ENCODE measurements at regions of chr3 and their contacts with region 1.

Region 1: GRCh38 chr3:48439820-48440589 is at the starts of genes CCDC51 and TMA7:
- DNase-seq: peak; percentile 93
- ATAC-seq: peak; percentile 96
- H3K4me3 ChIP-seq: peak within 1 kb of the TSS; percentile 89
- H3K27ac ChIP-seq: peak within 1 kb of the TSS; percentile 86
- H3K4me1 ChIP-seq: peaks cover 19% of the 10 kb centered on the region
- H3K27me3 ChIP-seq: no peaks in the 10 kb centered on the region
- CTCF ChIP-seq: 0 out of 6 replicates have a peak, but pooled peaks of 1 of the 3 experiments have one; percentile 5
- EP300 ChIP-seq: no peak
- POLR2A ChIP-seq: peak; percentile 97
- RAD21 ChIP-seq: no peak
- polyA plus RNA-seq, gene CCDC51: 10.6 to 12.6 TPM
- polyA plus RNA-seq, gene TMA7: 1,729 to 1,760 TPM

Region 2: DNA sequence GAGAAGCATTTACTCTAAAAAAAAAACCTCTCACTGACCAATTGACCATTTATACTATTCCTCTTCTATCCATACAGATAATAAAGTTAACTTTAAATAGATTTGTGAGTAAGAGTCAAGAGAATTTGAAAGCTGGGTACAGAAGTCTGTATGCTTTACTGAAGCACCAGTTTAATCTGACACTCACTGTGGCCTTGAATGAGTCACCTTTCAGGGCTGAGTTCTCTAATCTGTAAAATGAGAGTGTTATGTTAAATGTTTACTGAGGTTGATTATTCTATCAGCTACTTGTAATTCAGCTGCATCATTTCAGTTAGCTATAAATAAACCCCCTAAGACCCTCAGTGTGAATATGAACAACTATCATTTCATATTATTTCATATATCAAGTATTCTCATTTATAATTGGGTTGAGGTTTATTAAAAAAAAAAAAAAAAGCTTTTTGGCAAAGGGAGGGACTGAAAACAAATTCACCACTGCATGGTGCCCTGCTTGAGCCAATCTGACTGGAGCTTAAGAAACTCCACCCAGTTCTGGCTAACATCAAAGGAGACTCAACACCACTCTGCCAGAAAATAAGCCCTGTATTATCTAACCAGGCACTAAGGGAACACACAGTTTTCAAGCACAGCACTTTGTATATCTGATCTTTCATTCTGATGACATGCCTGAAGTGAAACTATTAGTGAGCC is 426.6 kb before region 1 on chr3:
- CTCF ChIA-PET with region 1: no interaction called
- POLR2A ChIA-PET with region 1: no interaction called
- RAD21 ChIA-PET with region 1: no interaction called
- SMC1A ChIA-PET with region 1: no interaction called
- in situ Hi-C with region 1: no loop called
- intact Hi-C with region 1: no loop called
- DNase-seq: no peak
- ATAC-seq: peak; percentile 80
- H3K4me3 ChIP-seq: no peak overlapping the region
- H3K27ac ChIP-seq: no peak overlapping the region
- H3K4me1 ChIP-seq: no peaks in the 10 kb centered on the region
- H3K27me3 ChIP-seq: no peaks in the 10 kb centered on the region
- CTCF ChIP-seq: no peak
- EP300 ChIP-seq: no peak
- POLR2A ChIP-seq: no peak
- RAD21 ChIP-seq: no peak

Region 3: GRCh38 chr3:48232734-48233133 is 207.3 kb before region 1 on chr3:
- CTCF ChIA-PET with region 1: interaction called, 267 read pairs
- POLR2A ChIA-PET with region 1: interaction called, 4 read pairs
- RAD21 ChIA-PET with region 1: interaction called, 72 read pairs
- SMC1A ChIA-PET with region 1: interaction called, 57 read pairs
- in situ Hi-C with region 1: loop called (anchors 5 kb)
- intact Hi-C with region 1: loop called (anchors 1 kb)
- DNase-seq: peak; percentile 63
- ATAC-seq: peak; percentile 100
- H3K4me3 ChIP-seq: peak overlapping the region; percentile 6; the same call in 1 of the 2 replicates
- H3K27ac ChIP-seq: peak overlapping the region; percentile 24; the same call in 1 of the 2 replicates
- H3K4me1 ChIP-seq: peaks cover 39% of the 10 kb centered on the region
- H3K27me3 ChIP-seq: no peaks in the 10 kb centered on the region
- CTCF ChIP-seq: peak; percentile 63 to 90 (median 85)
- EP300 ChIP-seq: no peak
- POLR2A ChIP-seq: no peak
- RAD21 ChIP-seq: peak; percentile 68

Region 4: GRCh38 chr3:48273594-48274211 is 166.3 kb before region 1 on chr3:
- CTCF ChIA-PET with region 1: interaction called, 157 read pairs
- POLR2A ChIA-PET with region 1: interaction called, 3 read pairs
- RAD21 ChIA-PET with region 1: interaction called, 73 read pairs
- SMC1A ChIA-PET with region 1: interaction called, 65 read pairs
- in situ Hi-C with region 1: loop called (anchors 5 kb)
- intact Hi-C with region 1: loop called (anchors 1 kb)
- DNase-seq: peak; percentile 30
- ATAC-seq: peak; percentile 91
- H3K4me3 ChIP-seq: no peak overlapping the region
- H3K27ac ChIP-seq: no peak overlapping the region
- H3K4me1 ChIP-seq: no peaks in the 10 kb centered on the region
- H3K27me3 ChIP-seq: no peaks in the 10 kb centered on the region
- CTCF ChIP-seq: peak; percentile 73 to 85 (median 76)
- EP300 ChIP-seq: no peak
- POLR2A ChIP-seq: no peak
- RAD21 ChIP-seq: peak; percentile 84

Region 5: DNA sequence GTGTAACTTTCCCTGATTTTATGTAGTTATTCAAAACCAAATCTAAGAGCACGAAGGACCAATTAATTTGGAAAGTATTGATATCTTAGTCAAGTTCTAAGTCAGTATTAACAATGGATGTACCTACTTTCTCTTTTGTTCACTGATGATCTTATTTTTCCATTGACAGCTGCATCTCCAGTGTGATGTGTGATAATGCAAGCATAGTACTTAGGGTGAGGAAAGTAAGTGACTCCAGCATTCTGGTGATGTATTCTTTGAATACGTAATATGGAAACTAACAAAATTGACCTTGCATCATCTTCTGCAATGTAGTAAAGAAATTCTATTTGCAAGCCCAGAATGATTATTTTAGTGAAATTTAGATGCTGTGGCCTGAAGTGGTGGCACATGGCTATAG is 45.6 kb before region 1 on chr3:
- CTCF ChIA-PET with region 1: interaction called, 757 read pairs
- POLR2A ChIA-PET with region 1: no interaction called
- RAD21 ChIA-PET with region 1: interaction called, 259 read pairs
- SMC1A ChIA-PET with region 1: interaction called, 287 read pairs
- in situ Hi-C with region 1: no loop called
- intact Hi-C with region 1: no loop called
- DNase-seq: no peak
- ATAC-seq: no peak
- H3K4me3 ChIP-seq: no peak overlapping the region
- H3K27ac ChIP-seq: no peak overlapping the region
- H3K4me1 ChIP-seq: no peaks in the 10 kb centered on the region
- H3K27me3 ChIP-seq: no peaks in the 10 kb centered on the region
- CTCF ChIP-seq: no peak
- EP300 ChIP-seq: no peak
- POLR2A ChIP-seq: no peak
- RAD21 ChIP-seq: no peak

Region 6: DNA sequence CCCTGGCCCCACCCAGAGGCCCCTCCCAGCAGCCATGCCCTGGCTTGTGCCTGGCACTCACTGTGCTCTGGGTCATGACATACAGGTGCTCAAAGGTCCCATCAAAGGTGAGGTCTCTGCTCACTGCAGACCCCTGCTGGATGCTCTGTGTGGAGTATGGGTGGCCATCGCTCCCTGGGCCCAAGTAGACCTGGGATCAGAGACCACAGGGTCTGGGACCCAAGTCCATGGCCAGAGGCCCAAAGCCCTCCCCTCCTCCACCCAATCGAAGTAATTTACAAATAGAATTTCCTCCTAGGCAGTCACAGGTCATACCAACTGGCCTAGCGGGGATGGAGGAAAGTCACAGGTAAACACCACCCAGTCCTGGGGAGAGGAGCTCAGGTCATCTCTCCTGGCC is 17.7 kb before region 1 on chr3:
- CTCF ChIA-PET with region 1: interaction called, 757 read pairs
- POLR2A ChIA-PET with region 1: interaction called, 7 read pairs
- RAD21 ChIA-PET with region 1: interaction called, 16 read pairs
- SMC1A ChIA-PET with region 1: interaction called, 8 read pairs
- in situ Hi-C with region 1: no loop called
- intact Hi-C with region 1: no loop called
- DNase-seq: no peak
- ATAC-seq: peak; percentile 22; the same call in 1 of the 3 replicates
- H3K4me3 ChIP-seq: no peak overlapping the region
- H3K27ac ChIP-seq: no peak overlapping the region
- H3K4me1 ChIP-seq: peaks cover 10% of the 10 kb centered on the region
- H3K27me3 ChIP-seq: no peaks in the 10 kb centered on the region
- CTCF ChIP-seq: peak; percentile 6 to 23 (median 17); a peak in 1 of 6 replicates
- EP300 ChIP-seq: no peak
- POLR2A ChIP-seq: no peak
- RAD21 ChIP-seq: no peak

Region 7: GRCh38 chr3:48507351-48508061 is 67.5 kb after region 1 on chr3:
- CTCF ChIA-PET with region 1: interaction called, 70 read pairs
- POLR2A ChIA-PET with region 1: interaction called, 5 read pairs
- RAD21 ChIA-PET with region 1: interaction called, 11 read pairs
- SMC1A ChIA-PET with region 1: interaction called, 17 read pairs
- in situ Hi-C with region 1: no loop called
- intact Hi-C with region 1: loop called (anchors 5 kb)
- DNase-seq: no peak
- ATAC-seq: peak; percentile 90
- H3K4me3 ChIP-seq: no peak overlapping the region
- H3K27ac ChIP-seq: no peak overlapping the region
- H3K4me1 ChIP-seq: peaks cover 6% of the 10 kb centered on the region
- H3K27me3 ChIP-seq: no peaks in the 10 kb centered on the region
- CTCF ChIP-seq: peak; percentile 80 to 83 (median 81); a peak in 5 of 6 replicates
- EP300 ChIP-seq: no peak
- POLR2A ChIP-seq: no peak
- RAD21 ChIP-seq: peak; percentile 91

Region 8: DNA sequence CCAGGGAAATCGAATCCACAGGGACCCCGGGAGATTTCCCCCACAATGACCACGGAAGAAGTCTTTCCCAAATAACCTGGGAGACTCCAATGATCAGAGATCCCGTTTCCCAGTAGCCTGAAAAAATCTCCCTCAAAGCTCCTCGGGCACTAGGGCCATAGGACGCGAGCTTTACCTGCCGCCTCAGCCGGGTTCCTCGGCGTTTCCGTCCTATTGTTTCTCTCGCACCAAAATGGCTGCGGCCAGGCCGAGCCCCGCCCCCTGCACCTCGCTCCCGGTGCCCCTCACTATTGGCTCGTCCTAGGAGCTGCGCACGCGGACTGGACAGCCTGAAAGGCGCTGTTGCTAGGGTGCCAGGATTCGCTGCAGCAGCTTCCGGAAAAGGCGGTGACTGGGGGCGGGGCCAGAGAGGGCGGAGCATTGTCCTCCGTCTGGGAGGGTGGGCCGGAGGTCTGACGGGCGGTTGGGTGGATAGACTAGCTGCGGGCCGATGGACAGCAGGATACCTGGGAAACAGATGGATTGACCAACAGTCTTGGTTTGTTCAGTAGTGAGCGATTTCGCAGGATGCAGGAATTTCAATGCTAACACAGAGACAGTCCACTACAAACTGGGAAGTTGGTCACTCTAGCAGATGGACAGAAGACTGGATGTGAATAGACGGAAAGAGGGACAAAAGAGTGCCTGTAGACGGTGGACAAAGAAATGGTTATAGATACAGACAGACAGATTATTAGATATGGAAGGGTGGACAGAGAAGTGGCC is 277.2 kb after region 1 on chr3 and contains the start of gene IP6K2:
- CTCF ChIA-PET with region 1: interaction called, 14 read pairs
- POLR2A ChIA-PET with region 1: no interaction called
- RAD21 ChIA-PET with region 1: no interaction called
- SMC1A ChIA-PET with region 1: no interaction called
- in situ Hi-C with region 1: no loop called
- intact Hi-C with region 1: no loop called
- DNase-seq: peak; percentile 89
- ATAC-seq: peak; percentile 99
- H3K4me3 ChIP-seq: peak within 1 kb of the TSS; percentile 90
- H3K27ac ChIP-seq: peak within 1 kb of the TSS; percentile 97
- H3K4me1 ChIP-seq: peaks cover 10% of the 10 kb centered on the region
- H3K27me3 ChIP-seq: no peaks in the 10 kb centered on the region
- CTCF ChIP-seq: no peak
- EP300 ChIP-seq: 0 out of 4 replicates have a peak, but pooled peaks of 1 of the 2 experiments have one; percentile 1
- POLR2A ChIP-seq: peak; percentile 95
- RAD21 ChIP-seq: no peak
- polyA plus RNA-seq, gene IP6K2: 25.8 to 37.6 TPM

Measured in GM12878 (cell line).